ENCODE measurements at regions of chr11 and their contacts with region 1.

Region 1: GRCh38 chr11:65859200-65859811 is 927 bp upstream of the MUS81 start:
- DNase-seq: peak; percentile 99
- H3K4me3 ChIP-seq: peak overlapping the region; percentile 75 to 95 (median 86)
- H3K27ac ChIP-seq: peak overlapping the region; percentile 96
- H3K4me1 ChIP-seq: peaks cover 0 to 15% (median 6%) of the 10 kb centered on the region in 4 experiments; a peak in 5 of 7 replicates
- H3K27me3 ChIP-seq: no peaks in the 10 kb centered on the region
- CTCF ChIP-seq: peak in 2 of 3 experiments; percentile 28 to 48; a peak in 3 of 4 replicates
- EP300 ChIP-seq: peak in 1 of 2 experiments; percentile 12; a peak in 1 of 3 replicates
- POLR2A ChIP-seq: peak in 1 of 2 experiments; percentile 96; a peak in 2 of 3 replicates
- RAD21 ChIP-seq: peak in 1 of 2 experiments; percentile 6; a peak in 1 of 4 replicates

Region 2: DNA sequence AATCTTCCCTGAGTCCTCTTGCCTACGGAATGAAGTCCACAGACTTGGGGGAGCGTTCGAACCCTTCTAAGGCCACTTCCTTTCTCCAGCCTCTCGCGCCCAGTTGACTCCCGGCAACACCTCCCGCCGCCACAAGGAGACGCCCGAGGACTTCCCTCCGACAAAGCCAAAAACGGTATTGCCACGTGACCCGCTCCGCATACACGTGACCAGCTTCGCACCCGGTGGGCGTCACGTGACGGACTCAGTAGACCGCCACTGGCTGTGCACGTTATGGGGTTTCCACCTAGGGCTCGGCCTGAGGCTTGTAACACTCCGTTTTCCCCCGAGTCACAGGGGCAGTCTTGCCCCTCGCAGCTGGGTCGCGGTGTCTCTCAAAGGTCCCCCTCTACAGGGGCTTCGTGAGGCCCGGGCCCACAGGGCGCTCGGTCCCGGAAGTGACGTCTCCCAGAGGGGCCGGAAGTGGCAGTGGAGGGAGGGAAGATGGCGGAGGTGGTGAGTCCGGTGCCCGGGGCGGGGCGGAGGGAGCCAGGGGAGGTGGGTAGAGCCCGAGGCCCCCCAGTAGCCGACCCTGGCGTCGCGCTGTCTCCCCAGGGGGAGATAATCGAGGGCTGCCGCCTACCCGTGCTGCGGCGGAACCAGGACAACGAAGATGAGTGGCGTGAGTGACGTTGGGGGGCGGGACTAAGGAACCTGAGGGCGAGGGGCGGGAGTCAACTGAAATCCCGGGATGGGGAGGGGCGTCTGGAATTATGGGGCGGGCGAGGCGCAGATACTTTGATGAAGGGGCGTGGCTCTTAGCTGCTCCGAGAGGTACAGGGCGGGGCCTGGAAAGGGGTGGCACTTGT is 147.3 kb before region 1 on chr11 and contains the start of gene KAT5:
- CTCF ChIA-PET with region 1: interaction called, 4 read pairs
- POLR2A ChIA-PET with region 1: interaction called, 20 read pairs
- DNase-seq: peak; percentile 91 to 100
- H3K4me3 ChIP-seq: peak within 1 kb of the TSS; percentile 62 to 87 (median 74)
- H3K27ac ChIP-seq: peak within 1 kb of the TSS; percentile 99
- H3K4me1 ChIP-seq: peaks cover 0 to 2% (median 2%) of the 10 kb centered on the region in 4 experiments; a peak in 1 of 7 replicates
- H3K27me3 ChIP-seq: no peaks in the 10 kb centered on the region
- CTCF ChIP-seq: peak; percentile 95 to 96 (median 95)
- EP300 ChIP-seq: 0 out of 3 replicates have a peak, but pooled peaks of 1 of the 2 experiments have one; percentile 60
- POLR2A ChIP-seq: peak; percentile 86 to 88
- RAD21 ChIP-seq: peak; percentile 94 to 96
- total RNA-seq, gene KAT5: 36.4 and 37.4 TPM in 2 replicates

Region 3: GRCh38 chr11:65791691-65792213 is 67.6 kb before region 1 on chr11:
- CTCF ChIA-PET with region 1: interaction called, 4 read pairs
- POLR2A ChIA-PET with region 1: interaction called, 20 read pairs
- DNase-seq: no peak
- H3K4me3 ChIP-seq: no peak overlapping the region
- H3K27ac ChIP-seq: no peak overlapping the region
- H3K4me1 ChIP-seq: peaks cover 14 to 25% (median 22%) of the 10 kb centered on the region in 4 experiments
- H3K27me3 ChIP-seq: peaks cover 5 to 22% (median 18%) of the 10 kb centered on the region in 4 experiments
- CTCF ChIP-seq: no peak
- EP300 ChIP-seq: no peak
- POLR2A ChIP-seq: no peak
- RAD21 ChIP-seq: no peak

Region 4: GRCh38 chr11:65873318-65874156 is 14.2 kb after region 1 on chr11:
- CTCF ChIA-PET with region 1: interaction called, 283 read pairs
- POLR2A ChIA-PET with region 1: interaction called, 1,071 read pairs
- DNase-seq: peak; percentile 84 to 100
- H3K4me3 ChIP-seq: peak overlapping the region; percentile 49 to 77 (median 68)
- H3K27ac ChIP-seq: no peak overlapping the region
- H3K4me1 ChIP-seq: peaks cover 0 to 8% (median under 1%) of the 10 kb centered on the region in 4 experiments; a peak in 4 of 7 replicates
- H3K27me3 ChIP-seq: peaks cover 0 to 35% (median 14%) of the 10 kb centered on the region in 4 experiments; a peak in 4 of 7 replicates
- CTCF ChIP-seq: no peak
- EP300 ChIP-seq: no peak
- POLR2A ChIP-seq: peak in 1 of 2 experiments; percentile 30; a peak in 1 of 3 replicates
- RAD21 ChIP-seq: no peak

Region 5: GRCh38 chr11:65900125-65900898 is 41.0 kb after region 1 on chr11 and contains the start of gene FOSL1:
- CTCF ChIA-PET with region 1: interaction called, 8 read pairs
- POLR2A ChIA-PET with region 1: interaction called, 17 read pairs
- DNase-seq: peak; percentile 91 to 93
- H3K4me3 ChIP-seq: peak within 1 kb of the TSS; percentile 39 to 71 (median 52)
- H3K27ac ChIP-seq: no peak within 1 kb of the TSS
- H3K4me1 ChIP-seq: peaks cover 3 to 11% (median 8%) of the 10 kb centered on the region in 4 experiments; a peak in 6 of 7 replicates
- H3K27me3 ChIP-seq: peaks cover 15 to 41% (median 36%) of the 10 kb centered on the region in 4 experiments
- CTCF ChIP-seq: no peak
- EP300 ChIP-seq: peak in 1 of 2 experiments; percentile 76; a peak in 1 of 3 replicates
- POLR2A ChIP-seq: peak in 1 of 2 experiments; percentile 61; a peak in 2 of 3 replicates
- RAD21 ChIP-seq: no peak
- total RNA-seq, gene FOSL1: 6.3 and 7.5 TPM in 2 replicates

Region 6: GRCh38 chr11:66051766-66052663 is 192.7 kb after region 1 on chr11 and contains the start of gene SF3B2:
- CTCF ChIA-PET with region 1: interaction called, 4 read pairs
- POLR2A ChIA-PET with region 1: interaction called, 11 read pairs
- DNase-seq: peak; percentile 90 to 96
- H3K4me3 ChIP-seq: peak within 1 kb of the TSS; percentile 97 to 99 (median 98)
- H3K27ac ChIP-seq: peak within 1 kb of the TSS; percentile 85
- H3K4me1 ChIP-seq: peaks cover 0 to 24% (median 19%) of the 10 kb centered on the region in 4 experiments; a peak in 6 of 7 replicates
- H3K27me3 ChIP-seq: no peaks in the 10 kb centered on the region
- CTCF ChIP-seq: peak in 1 of 3 experiments; percentile 1; a peak in 1 of 4 replicates
- EP300 ChIP-seq: peak in 1 of 2 experiments; percentile 33; a peak in 1 of 3 replicates
- POLR2A ChIP-seq: peak; percentile 60 to 83
- RAD21 ChIP-seq: no peak
- total RNA-seq, gene SF3B2: 231 and 237 TPM in 2 replicates

Region 7: GRCh38 chr11:66344550-66345315 is 485.4 kb after region 1 on chr11 and contains the start of gene BRMS1:
- CTCF ChIA-PET with region 1: no interaction called
- POLR2A ChIA-PET with region 1: no interaction called
- DNase-seq: peak; percentile 86 to 98
- H3K4me3 ChIP-seq: peak within 1 kb of the TSS; percentile 75 to 100 (median 92)
- H3K27ac ChIP-seq: peak within 1 kb of the TSS; percentile 61; the same call in 1 of the 2 replicates
- H3K4me1 ChIP-seq: peaks cover 0 to 15% (median 9%) of the 10 kb centered on the region in 4 experiments; a peak in 6 of 7 replicates
- H3K27me3 ChIP-seq: peaks cover 0 to 2% (median 0%) of the 10 kb centered on the region in 4 experiments; a peak in 3 of 7 replicates
- CTCF ChIP-seq: no peak
- EP300 ChIP-seq: no peak
- POLR2A ChIP-seq: peak in 1 of 2 experiments; percentile 96; a peak in 2 of 3 replicates
- RAD21 ChIP-seq: no peak
- total RNA-seq, gene BRMS1: 44.8 and 46.1 TPM in 2 replicates